ENCODE measurements at regions of chr16 and their contacts with region 1.

Region 1: DNA sequence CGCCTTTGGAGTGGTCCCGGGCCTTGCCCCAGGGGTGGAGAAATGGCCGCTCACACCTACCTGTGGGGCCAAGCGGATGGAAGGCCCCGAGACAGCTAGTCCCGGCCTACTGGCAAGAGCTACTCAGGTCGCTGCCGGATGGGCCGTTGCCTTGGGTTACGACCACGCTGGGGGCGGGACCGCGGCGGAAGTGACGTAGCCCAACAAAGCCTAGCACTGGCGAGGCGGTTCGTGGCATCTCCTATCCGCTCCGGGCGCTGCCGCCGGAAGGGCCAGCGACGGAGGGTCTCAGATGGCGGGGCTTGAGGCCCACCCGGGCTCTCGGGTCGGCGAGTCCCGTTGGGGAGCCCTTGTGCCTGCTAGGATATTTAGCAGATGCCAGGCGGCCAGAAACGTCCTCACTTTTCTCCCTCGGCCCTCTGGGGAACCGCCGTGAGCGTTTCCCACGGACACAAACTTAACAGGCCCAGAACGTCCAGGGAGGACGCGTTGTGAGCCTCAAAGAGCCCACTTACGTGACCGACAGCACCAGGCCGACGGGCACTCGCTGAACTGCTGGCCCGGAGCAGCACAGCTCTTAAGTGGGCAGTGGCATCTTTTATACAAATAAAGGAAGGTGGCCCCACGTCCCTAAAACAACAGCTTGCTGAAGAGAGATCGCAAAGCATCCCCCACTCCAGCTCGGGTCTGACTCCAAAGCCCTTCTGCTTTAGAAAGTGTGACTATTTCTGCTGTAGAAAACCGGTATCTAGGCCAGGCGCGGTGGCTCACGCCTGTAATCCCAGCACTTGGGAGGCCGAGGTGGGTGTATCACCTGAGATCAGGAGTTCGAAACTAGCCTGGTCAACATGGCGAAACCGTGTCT is at the start of gene C16orf46:
- DNase-seq: peak; percentile 99
- ATAC-seq: peak; percentile 89
- H3K4me3 Mint-ChIP-seq: no peak within 1 kb of the TSS
- H3K27ac Mint-ChIP-seq: no peak within 1 kb of the TSS
- H3K4me1 Mint-ChIP-seq: peaks cover 9% of the 10 kb centered on the region
- H3K27me3 Mint-ChIP-seq: peaks cover 4% of the 10 kb centered on the region
- total RNA-seq, gene C16orf46: 0.53 to 0.65 TPM

Region 2: DNA sequence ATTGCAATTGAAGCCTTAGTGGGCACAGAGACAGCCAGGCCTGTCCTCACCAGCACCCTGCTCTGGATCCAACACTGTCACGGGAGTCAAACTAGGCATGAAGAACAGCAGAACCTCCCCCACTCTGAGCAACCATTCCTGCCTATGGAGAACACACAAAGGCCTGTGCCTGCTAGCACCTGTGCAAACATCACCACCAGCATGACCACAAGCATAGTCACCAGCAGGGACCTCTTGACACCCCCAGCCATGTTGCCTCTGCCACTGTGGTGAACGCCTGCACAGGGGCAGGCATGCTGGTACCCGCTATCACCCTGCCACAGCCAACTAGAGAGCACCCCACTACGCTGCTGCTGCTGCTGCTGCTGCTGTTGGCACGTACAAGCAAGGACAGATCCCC is 122.3 kb before region 1 on chr16:
- POLR2A ChIA-PET with region 1: no interaction called
- DNase-seq: no peak
- ATAC-seq: no peak
- H3K4me3 Mint-ChIP-seq: no peak overlapping the region
- H3K27ac Mint-ChIP-seq: no peak overlapping the region
- H3K4me1 Mint-ChIP-seq: no peaks in the 10 kb centered on the region
- H3K27me3 Mint-ChIP-seq: peaks cover 3% of the 10 kb centered on the region

Region 3: DNA sequence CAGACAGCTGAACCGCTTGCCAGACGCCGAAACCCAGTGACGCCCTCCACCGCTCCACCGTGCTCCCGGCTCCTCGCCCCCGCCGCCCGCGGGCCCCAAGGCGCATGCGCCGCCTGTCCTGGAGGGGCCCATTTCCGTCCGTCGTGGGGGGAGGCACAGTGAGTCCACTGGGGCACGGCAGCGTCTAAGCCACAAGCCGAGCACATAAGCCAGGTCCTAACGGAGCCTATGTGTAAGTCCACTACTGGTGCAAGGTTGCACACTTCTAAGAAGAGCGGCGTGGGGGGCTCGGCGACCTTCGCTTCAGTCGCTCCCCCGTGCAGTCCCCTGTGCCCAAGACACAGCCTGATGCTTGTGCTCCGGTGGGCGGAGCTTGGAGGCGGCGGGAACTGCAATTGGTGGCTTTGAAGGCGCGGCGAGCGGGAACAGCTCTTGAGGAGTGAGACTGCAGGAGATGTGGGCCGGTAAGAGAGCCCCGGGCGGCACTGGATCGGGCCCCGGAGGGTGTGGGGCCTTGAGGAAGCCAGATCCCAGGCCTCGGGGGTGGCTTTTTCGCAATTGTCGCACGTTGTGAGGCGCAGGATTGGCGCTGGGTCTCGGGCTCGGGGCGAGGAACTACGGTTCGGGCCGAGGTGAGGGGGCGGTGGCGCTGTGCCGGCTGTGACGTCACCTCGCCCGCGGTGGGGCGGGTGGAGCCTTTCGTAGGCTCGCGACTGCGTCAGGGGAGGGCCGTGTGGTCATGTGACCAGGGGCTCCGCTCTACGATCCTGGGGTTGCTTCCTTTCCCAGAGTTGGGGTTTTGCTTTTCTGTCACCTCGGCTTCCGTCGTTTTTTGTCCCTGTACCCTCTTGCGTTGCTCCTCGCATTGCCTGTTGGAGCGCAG is 70.3 kb before region 1 on chr16 and contains the starts of genes CENPN and CMC2:
- POLR2A ChIA-PET with region 1: interaction called, 14 read pairs
- DNase-seq: peak; percentile 98
- ATAC-seq: peak; percentile 83
- H3K4me3 Mint-ChIP-seq: peak within 1 kb of the TSS; percentile 95
- H3K27ac Mint-ChIP-seq: peak within 1 kb of the TSS; percentile 100
- H3K4me1 Mint-ChIP-seq: peaks cover 41% of the 10 kb centered on the region
- H3K27me3 Mint-ChIP-seq: no peaks in the 10 kb centered on the region
- total RNA-seq, gene CENPN: 39.4 to 47.0 TPM
- total RNA-seq, gene CMC2: 72.3 to 73.0 TPM

Region 4: GRCh38 chr16:81035398-81035974 is 41.8 kb before region 1 on chr16 and contains the start of gene ATMIN:
- POLR2A ChIA-PET with region 1: interaction called, 22 read pairs
- DNase-seq: peak; percentile 97
- ATAC-seq: peak; percentile 94
- H3K4me3 Mint-ChIP-seq: peak within 1 kb of the TSS; percentile 86
- H3K27ac Mint-ChIP-seq: peak within 1 kb of the TSS; percentile 65
- H3K4me1 Mint-ChIP-seq: peaks cover 25% of the 10 kb centered on the region
- H3K27me3 Mint-ChIP-seq: no peaks in the 10 kb centered on the region
- total RNA-seq, gene ATMIN: 28.3 to 29.3 TPM

Region 5: GRCh38 chr16:81053761-81054160 is 23.5 kb before region 1 on chr16:
- POLR2A ChIA-PET with region 1: no interaction called
- DNase-seq: no peak
- ATAC-seq: no peak
- H3K4me3 Mint-ChIP-seq: no peak overlapping the region
- H3K27ac Mint-ChIP-seq: no peak overlapping the region
- H3K4me1 Mint-ChIP-seq: peaks cover 6% of the 10 kb centered on the region
- H3K27me3 Mint-ChIP-seq: peaks cover 1% of the 10 kb centered on the region

Region 6: GRCh38 chr16:81140930-81141780 is 63.8 kb after region 1 on chr16:
- POLR2A ChIA-PET with region 1: no interaction called
- DNase-seq: no peak
- ATAC-seq: no peak
- H3K4me3 Mint-ChIP-seq: no peak overlapping the region
- H3K27ac Mint-ChIP-seq: no peak overlapping the region
- H3K4me1 Mint-ChIP-seq: no peaks in the 10 kb centered on the region
- H3K27me3 Mint-ChIP-seq: peaks cover 8% of the 10 kb centered on the region

Region 7: DNA sequence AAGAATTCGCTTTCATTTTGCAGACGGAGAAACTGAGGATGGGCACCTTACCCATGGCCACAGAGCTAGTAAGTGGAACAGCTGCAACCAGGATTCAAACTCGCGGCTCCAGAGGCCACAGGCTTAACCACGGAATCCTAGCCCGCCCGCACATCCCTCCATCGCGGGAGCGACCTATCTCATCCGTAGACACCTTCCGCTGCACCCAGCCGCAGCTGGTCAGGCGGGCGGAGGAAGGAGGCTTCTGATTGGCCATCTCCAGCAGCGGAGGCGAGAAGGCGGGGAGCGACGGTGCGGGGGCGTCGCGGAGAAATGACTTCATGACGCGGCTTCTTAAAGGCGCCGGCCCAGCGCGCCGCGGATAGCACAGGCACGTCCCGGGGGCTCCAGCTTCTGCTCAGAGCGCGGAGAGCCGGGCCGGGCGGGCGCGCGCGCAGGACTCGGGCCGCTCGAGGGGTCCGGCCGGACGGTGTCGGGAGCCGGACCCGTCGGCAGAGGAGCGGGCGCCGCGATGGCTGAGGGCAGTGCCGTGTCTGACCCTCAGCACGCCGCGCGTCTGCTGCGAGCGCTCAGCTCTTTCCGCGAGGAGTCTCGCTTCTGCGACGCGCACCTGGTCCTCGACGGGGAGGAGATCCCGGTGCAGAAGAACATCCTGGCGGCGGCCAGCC is 237.4 kb after region 1 on chr16 and contains the start of gene GAN:
- POLR2A ChIA-PET with region 1: interaction called, 11 read pairs
- DNase-seq: peak; percentile 95
- ATAC-seq: peak; percentile 96
- H3K4me3 Mint-ChIP-seq: peak within 1 kb of the TSS; percentile 93
- H3K27ac Mint-ChIP-seq: peak within 1 kb of the TSS; percentile 86
- H3K4me1 Mint-ChIP-seq: peaks cover 30% of the 10 kb centered on the region
- H3K27me3 Mint-ChIP-seq: peaks cover 1% of the 10 kb centered on the region
- total RNA-seq, gene GAN: 9.0 to 9.3 TPM

Measured in activated naive CD8-positive, alpha-beta T cell treated with anti-CD3 and anti-CD28 coated beads, Interleukin-2, amount 10 ng/mL, durations not matched to agents 7 days and 5 days (primary cell).